ENCODE measurements at regions of chr11 and their contacts with region 1.

Region 1: DNA sequence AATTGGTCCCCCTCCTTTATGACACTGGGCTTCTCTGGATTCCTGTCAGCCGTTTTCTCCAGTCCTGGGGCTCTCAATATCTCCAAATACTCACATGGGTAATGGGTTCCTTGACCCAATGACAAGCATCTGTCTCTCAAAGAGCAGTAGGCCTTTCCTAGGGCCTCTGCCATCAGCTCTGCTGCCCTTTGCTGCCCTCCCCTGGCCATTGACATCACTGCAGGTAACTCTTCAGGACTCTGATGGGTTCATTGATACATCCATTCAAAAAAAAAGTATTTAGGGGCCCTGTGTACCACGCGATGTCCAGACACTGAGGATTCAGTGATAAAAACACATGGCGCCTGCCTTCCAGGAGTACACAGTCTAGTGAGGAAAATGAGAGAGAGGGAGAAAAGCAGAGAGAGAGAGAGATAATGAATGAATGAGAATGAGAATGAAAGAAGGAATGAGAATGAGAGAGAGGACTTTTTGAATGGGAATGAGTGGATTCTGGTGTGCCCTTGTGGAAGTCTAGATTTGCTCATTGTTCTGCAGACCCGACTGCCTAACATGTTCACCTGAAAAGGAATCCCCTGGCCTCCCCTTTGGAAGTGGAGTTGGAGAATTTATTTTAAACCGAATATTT is 42.6 kb upstream of the OLFML1 start:
- DNase-seq: peak; percentile 51 to 77 (median 64)
- ATAC-seq: peak; percentile 75
- H3K4me3 ChIP-seq: no peak overlapping the region
- H3K4me3 Mint-ChIP-seq: no peak overlapping the region
- H3K27ac ChIP-seq: no peak overlapping the region
- H3K27ac Mint-ChIP-seq: no peak overlapping the region
- H3K4me1 ChIP-seq: no peaks in the 10 kb centered on the region
- H3K4me1 Mint-ChIP-seq: no peaks in the 10 kb centered on the region
- H3K27me3 ChIP-seq: no peaks in the 10 kb centered on the region
- H3K27me3 Mint-ChIP-seq: peaks cover 3% of the 10 kb centered on the region
- CTCF ChIP-seq: peak; percentile 86

Region 2: GRCh38 chr11:6737872-6738466 is 704.7 kb before region 1 on chr11:
- CTCF ChIA-PET with region 1: no interaction called
- POLR2A ChIA-PET with region 1: no interaction called
- intact Hi-C with region 1: loop called in 1 of 2 experiments (anchors 2 kb)
- DNase-seq: peak; percentile 27 to 88 (median 57)
- ATAC-seq: peak; percentile 56
- H3K4me3 ChIP-seq: no peak overlapping the region
- H3K4me3 Mint-ChIP-seq: peak overlapping the region; percentile 12
- H3K27ac ChIP-seq: peak overlapping the region; percentile 2 to 56
- H3K27ac Mint-ChIP-seq: peak overlapping the region; percentile 76
- H3K4me1 ChIP-seq: peaks cover 62% of the 10 kb centered on the region
- H3K4me1 Mint-ChIP-seq: peaks cover 88% of the 10 kb centered on the region
- H3K27me3 ChIP-seq: no peaks in the 10 kb centered on the region
- H3K27me3 Mint-ChIP-seq: no peaks in the 10 kb centered on the region
- CTCF ChIP-seq: peak; percentile 77

Region 3: DNA sequence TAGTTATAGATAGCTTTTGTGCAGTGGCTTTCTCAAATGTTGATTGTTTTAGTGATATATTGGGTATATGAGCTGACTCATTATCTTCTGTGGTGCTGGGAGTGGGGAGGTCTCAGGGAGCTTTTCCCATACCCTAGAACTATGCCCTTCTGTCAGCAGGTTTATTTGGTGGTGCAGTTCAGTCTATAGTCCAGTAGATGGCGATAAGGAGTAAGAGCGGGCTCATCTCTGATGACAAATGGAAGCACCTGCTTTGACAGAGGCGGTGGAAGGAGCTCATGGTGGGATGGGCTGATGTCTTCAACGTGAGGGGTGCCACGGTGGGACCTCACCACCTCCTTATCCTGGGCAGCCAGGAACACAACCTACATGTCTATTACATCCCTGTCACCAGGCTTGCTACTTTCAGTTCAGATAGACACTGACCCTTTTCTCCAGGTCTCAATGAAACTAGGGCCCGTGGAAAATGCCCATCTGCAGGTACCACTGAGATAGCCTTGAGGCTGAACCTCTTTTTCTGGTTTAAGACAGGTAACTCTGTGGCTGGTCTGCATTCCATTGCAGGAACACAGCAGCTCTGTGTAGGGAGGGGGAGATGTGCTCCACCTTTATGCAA is 630.2 kb before region 1 on chr11:
- CTCF ChIA-PET with region 1: no interaction called
- POLR2A ChIA-PET with region 1: no interaction called
- intact Hi-C with region 1: loop called (anchors 2 kb)
- DNase-seq: peak in 9 of 14 experiments; percentile 1 to 68 (median 18)
- ATAC-seq: peak; percentile 88
- H3K4me3 ChIP-seq: no peak overlapping the region
- H3K4me3 Mint-ChIP-seq: no peak overlapping the region
- H3K27ac ChIP-seq: no peak overlapping the region
- H3K27ac Mint-ChIP-seq: no peak overlapping the region
- H3K4me1 ChIP-seq: peaks cover 4% of the 10 kb centered on the region
- H3K4me1 Mint-ChIP-seq: no peaks in the 10 kb centered on the region
- H3K27me3 ChIP-seq: no peaks in the 10 kb centered on the region
- H3K27me3 Mint-ChIP-seq: peaks cover 49% of the 10 kb centered on the region
- CTCF ChIP-seq: peak; percentile 91

Region 4: GRCh38 chr11:7098235-7098832 is 344.4 kb before region 1 on chr11:
- CTCF ChIA-PET with region 1: interaction called, 13 read pairs
- POLR2A ChIA-PET with region 1: no interaction called
- intact Hi-C with region 1: loop called (anchors 1 to 2 kb)
- DNase-seq: peak in 3 of 14 experiments; percentile 47 to 73 (median 64)
- ATAC-seq: peak; percentile 54
- H3K4me3 ChIP-seq: no peak overlapping the region
- H3K4me3 Mint-ChIP-seq: no peak overlapping the region
- H3K27ac ChIP-seq: no peak overlapping the region
- H3K27ac Mint-ChIP-seq: no peak overlapping the region
- H3K4me1 ChIP-seq: no peaks in the 10 kb centered on the region
- H3K4me1 Mint-ChIP-seq: no peaks in the 10 kb centered on the region
- H3K27me3 ChIP-seq: peaks cover 0 to 30% of the 10 kb centered on the region in 2 experiments
- H3K27me3 Mint-ChIP-seq: peaks cover 31% of the 10 kb centered on the region
- CTCF ChIP-seq: peak; percentile 72

Region 5: DNA sequence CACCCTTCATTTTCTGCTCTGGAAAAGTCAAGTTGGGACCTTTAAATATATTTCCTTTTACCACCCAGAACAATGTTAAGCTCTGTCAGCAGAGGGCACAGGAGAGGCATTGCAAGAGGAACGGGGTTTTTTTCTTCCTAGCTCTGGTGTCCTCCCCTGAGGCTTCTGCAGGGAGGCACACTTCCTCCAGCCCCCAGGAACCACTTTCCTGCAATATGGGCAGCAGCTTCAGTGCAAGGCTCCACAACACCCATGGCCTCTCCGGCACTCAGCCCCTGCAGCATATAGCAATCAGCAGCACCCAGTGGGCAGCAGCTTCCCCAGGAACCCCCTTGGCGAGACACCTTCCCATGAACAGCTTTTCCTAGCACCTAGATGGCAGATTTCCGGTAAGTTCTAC is 89.6 kb before region 1 on chr11:
- CTCF ChIA-PET with region 1: interaction called, 15 read pairs
- POLR2A ChIA-PET with region 1: interaction called, 3 read pairs
- intact Hi-C with region 1: loop called (anchors 1 to 5 kb)
- DNase-seq: peak in 4 of 14 experiments; percentile 5 to 43 (median 24)
- ATAC-seq: no peak
- H3K4me3 ChIP-seq: no peak overlapping the region
- H3K4me3 Mint-ChIP-seq: no peak overlapping the region
- H3K27ac ChIP-seq: no peak overlapping the region
- H3K27ac Mint-ChIP-seq: no peak overlapping the region
- H3K4me1 ChIP-seq: no peaks in the 10 kb centered on the region
- H3K4me1 Mint-ChIP-seq: no peaks in the 10 kb centered on the region
- H3K27me3 ChIP-seq: peaks cover under 1 to 7% of the 10 kb centered on the region in 2 experiments
- H3K27me3 Mint-ChIP-seq: peaks cover 17% of the 10 kb centered on the region
- CTCF ChIP-seq: no peak

Region 6: GRCh38 chr11:7413961-7414915 is 28.5 kb before region 1 on chr11:
- CTCF ChIA-PET with region 1: no interaction called
- POLR2A ChIA-PET with region 1: no interaction called
- intact Hi-C with region 1: no loop called
- DNase-seq: no peak
- ATAC-seq: no peak
- H3K4me3 ChIP-seq: no peak overlapping the region
- H3K4me3 Mint-ChIP-seq: no peak overlapping the region
- H3K27ac ChIP-seq: no peak overlapping the region
- H3K27ac Mint-ChIP-seq: no peak overlapping the region
- H3K4me1 ChIP-seq: no peaks in the 10 kb centered on the region
- H3K4me1 Mint-ChIP-seq: no peaks in the 10 kb centered on the region
- H3K27me3 ChIP-seq: peaks cover 14 to 16% of the 10 kb centered on the region in 2 experiments
- H3K27me3 Mint-ChIP-seq: peaks cover 54% of the 10 kb centered on the region
- CTCF ChIP-seq: no peak

Region 7: GRCh38 chr11:7512525-7513233 is 70.0 kb after region 1 on chr11:
- CTCF ChIA-PET with region 1: no interaction called
- POLR2A ChIA-PET with region 1: no interaction called
- intact Hi-C with region 1: no loop called
- DNase-seq: peak in 5 of 14 experiments; percentile 2 to 61 (median 29)
- ATAC-seq: peak; percentile 21
- H3K4me3 ChIP-seq: peak overlapping the region; percentile 99
- H3K4me3 Mint-ChIP-seq: peak overlapping the region; percentile 99
- H3K27ac ChIP-seq: peak overlapping the region; percentile 81 to 84
- H3K27ac Mint-ChIP-seq: peak overlapping the region; percentile 97
- H3K4me1 ChIP-seq: peaks cover 18% of the 10 kb centered on the region
- H3K4me1 Mint-ChIP-seq: peaks cover 58% of the 10 kb centered on the region
- H3K27me3 ChIP-seq: no peaks in the 10 kb centered on the region
- H3K27me3 Mint-ChIP-seq: no peaks in the 10 kb centered on the region
- CTCF ChIP-seq: no peak

Region 8: GRCh38 chr11:7592711-7593110 is 150.0 kb after region 1 on chr11:
- CTCF ChIA-PET with region 1: no interaction called
- POLR2A ChIA-PET with region 1: no interaction called
- intact Hi-C with region 1: no loop called
- DNase-seq: peak in 3 of 14 experiments; percentile 26 to 63 (median 37)
- ATAC-seq: no peak
- H3K4me3 ChIP-seq: no peak overlapping the region
- H3K4me3 Mint-ChIP-seq: no peak overlapping the region
- H3K27ac ChIP-seq: no peak overlapping the region
- H3K27ac Mint-ChIP-seq: no peak overlapping the region
- H3K4me1 ChIP-seq: peaks cover 4% of the 10 kb centered on the region
- H3K4me1 Mint-ChIP-seq: peaks cover 31% of the 10 kb centered on the region
- H3K27me3 ChIP-seq: no peaks in the 10 kb centered on the region
- H3K27me3 Mint-ChIP-seq: no peaks in the 10 kb centered on the region
- CTCF ChIP-seq: no peak

Region 9: DNA sequence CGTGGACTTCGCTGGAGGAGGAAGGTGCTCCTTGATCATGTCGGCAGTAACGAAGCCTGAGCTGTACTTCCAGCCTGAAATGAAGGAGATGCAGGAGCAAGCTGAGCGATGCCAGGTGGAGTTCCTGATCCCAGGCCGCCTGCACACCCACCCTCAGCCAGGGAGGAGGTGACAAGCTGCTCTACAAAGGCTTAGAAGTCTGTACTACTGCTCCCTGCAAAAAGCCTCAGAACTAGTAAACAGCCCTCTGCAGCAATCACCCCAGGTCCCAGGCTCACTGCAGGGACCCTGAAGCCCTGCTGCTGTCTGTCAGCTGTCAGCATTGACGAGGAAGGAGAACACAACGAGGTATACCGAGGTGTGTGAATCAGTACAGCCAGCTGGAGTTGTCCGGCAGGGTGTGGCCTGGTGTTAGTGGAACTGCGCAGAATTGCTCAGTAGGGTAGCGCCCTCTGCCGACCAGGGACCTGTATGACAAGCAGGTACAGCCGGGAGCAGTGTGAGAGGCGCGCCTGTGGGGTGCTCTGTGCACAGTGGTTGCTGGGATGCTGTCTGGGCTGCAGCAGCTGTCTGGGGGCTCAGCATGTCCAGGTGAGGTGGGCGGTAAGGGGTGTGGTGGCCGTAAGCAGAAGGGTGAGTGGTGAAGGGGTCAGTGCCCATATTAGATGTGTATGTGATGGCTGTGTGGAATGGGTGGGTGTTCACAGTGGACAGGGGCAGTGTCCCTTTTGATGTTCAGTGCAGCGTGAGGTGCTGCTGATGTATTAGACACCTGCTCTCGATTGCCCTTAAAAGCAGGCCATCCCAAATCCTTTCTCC is 223.0 kb after region 1 on chr11:
- CTCF ChIA-PET with region 1: no interaction called
- POLR2A ChIA-PET with region 1: no interaction called
- intact Hi-C with region 1: loop called in 1 of 2 experiments (anchors 2 kb)
- DNase-seq: peak; percentile 39 to 82 (median 60)
- ATAC-seq: peak; percentile 97
- H3K4me3 ChIP-seq: no peak overlapping the region
- H3K4me3 Mint-ChIP-seq: no peak overlapping the region
- H3K27ac ChIP-seq: no peak overlapping the region
- H3K27ac Mint-ChIP-seq: no peak overlapping the region
- H3K4me1 ChIP-seq: no peaks in the 10 kb centered on the region
- H3K4me1 Mint-ChIP-seq: no peaks in the 10 kb centered on the region
- H3K27me3 ChIP-seq: peaks cover 0 to 3% of the 10 kb centered on the region in 2 experiments
- H3K27me3 Mint-ChIP-seq: peaks cover 8% of the 10 kb centered on the region
- CTCF ChIP-seq: peak; percentile 93

Region 10: GRCh38 chr11:7696424-7696823 is 253.7 kb after region 1 on chr11:
- CTCF ChIA-PET with region 1: no interaction called
- POLR2A ChIA-PET with region 1: no interaction called
- intact Hi-C with region 1: loop called in 1 of 2 experiments (anchors 5 kb)
- DNase-seq: no peak
- ATAC-seq: no peak
- H3K4me3 ChIP-seq: no peak overlapping the region
- H3K4me3 Mint-ChIP-seq: no peak overlapping the region
- H3K27ac ChIP-seq: no peak overlapping the region
- H3K27ac Mint-ChIP-seq: no peak overlapping the region
- H3K4me1 ChIP-seq: no peaks in the 10 kb centered on the region
- H3K4me1 Mint-ChIP-seq: no peaks in the 10 kb centered on the region
- H3K27me3 ChIP-seq: peaks cover 14 to 31% of the 10 kb centered on the region in 2 experiments
- H3K27me3 Mint-ChIP-seq: peaks cover 44% of the 10 kb centered on the region
- CTCF ChIP-seq: no peak

Measured in CD4-positive, alpha-beta T cell (primary cell).